Activated naive CD4-positive, alpha-beta T cell treated with anti-CD3 and anti-CD28 coated beads, Interleukin-2, amount 10 ng/mL, durations not matched to agents 7 days and 5 days (primary cell): ENCODE measurements at regions of chr4 and their contacts with region 1.

Region 1: GRCh38 chr4:152556283-152556682 is 20.4 kb upstream of the FBXW7 start:
- DNase-seq: no peak
- H3K4me3 Mint-ChIP-seq: peak overlapping the region; percentile 39
- H3K27ac Mint-ChIP-seq: peak overlapping the region; percentile 75
- H3K4me1 Mint-ChIP-seq: peaks cover 51% of the 10 kb centered on the region
- H3K27me3 Mint-ChIP-seq: no peaks in the 10 kb centered on the region

Region 2: GRCh38 chr4:152535903-152536544 is 20.3 kb before region 1 on chr4 and contains the start of gene FBXW7:
- CTCF ChIA-PET with region 1: interaction called, 12 read pairs
- DNase-seq: peak; percentile 100
- H3K4me3 Mint-ChIP-seq: peak within 1 kb of the TSS; percentile 97
- H3K27ac Mint-ChIP-seq: peak within 1 kb of the TSS; percentile 100
- H3K4me1 Mint-ChIP-seq: peaks cover 52% of the 10 kb centered on the region
- H3K27me3 Mint-ChIP-seq: peaks cover 7% of the 10 kb centered on the region

Region 3: GRCh38 chr4:152763796-152764195 is 207.5 kb after region 1 on chr4:
- CTCF ChIA-PET with region 1: no interaction called
- DNase-seq: no peak
- H3K4me3 Mint-ChIP-seq: no peak overlapping the region
- H3K27ac Mint-ChIP-seq: no peak overlapping the region
- H3K4me1 Mint-ChIP-seq: no peaks in the 10 kb centered on the region
- H3K27me3 Mint-ChIP-seq: peaks cover 16% of the 10 kb centered on the region